ENCODE measurements at regions of chr12 and their contacts with region 1.

Region 1: DNA sequence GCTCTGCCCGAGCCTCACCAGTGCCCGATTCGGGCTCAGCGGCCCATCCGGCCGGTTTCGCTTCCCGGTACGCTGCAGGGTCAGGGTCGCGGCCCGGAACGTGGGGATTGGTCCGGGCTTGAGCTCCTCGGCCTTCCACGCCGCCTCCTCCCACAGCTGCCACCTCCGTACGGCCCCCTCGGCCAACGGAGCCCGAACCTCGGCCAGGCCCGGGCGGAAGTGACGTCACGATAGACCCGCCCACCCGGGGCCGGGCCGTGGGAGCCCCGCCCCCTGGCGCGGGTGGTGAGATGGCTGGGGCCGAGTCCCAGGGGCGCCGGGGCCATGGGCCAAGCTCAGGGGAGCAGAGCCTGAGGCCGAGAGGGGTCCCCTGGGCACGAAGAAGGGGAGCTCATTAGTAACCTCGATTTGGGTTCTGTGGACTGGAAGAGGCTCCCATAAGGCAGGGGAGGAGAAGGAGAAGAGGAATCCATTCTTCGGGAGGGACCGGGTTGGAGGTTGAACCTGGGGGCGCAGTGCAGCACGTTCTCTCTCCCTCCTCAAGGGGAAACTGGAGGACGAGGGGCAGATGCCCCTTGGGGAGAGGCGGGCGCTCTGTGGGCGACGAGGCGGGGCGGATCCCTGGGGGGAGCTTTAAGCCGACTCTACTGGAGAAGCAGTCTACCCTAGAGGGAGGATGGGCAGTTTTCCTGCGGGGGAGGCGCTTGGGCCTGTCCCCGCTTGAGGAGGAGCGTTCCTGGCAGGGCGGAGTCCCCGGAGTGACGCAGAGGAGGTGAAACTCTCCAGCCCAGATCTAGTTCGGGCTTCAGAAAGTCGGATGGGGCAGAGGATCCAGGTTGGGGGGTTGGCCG is at the start of gene MLF2:
- DNase-seq: peak; percentile 96
- H3K4me3 ChIP-seq: peak within 1 kb of the TSS; percentile 93
- CTCF ChIP-seq: peak; percentile 94

Region 2: GRCh38 chr12:6708960-6709394 is 44.2 kb before region 1 on chr12:
- CTCF ChIA-PET with region 1: interaction called, 11 read pairs
- POLR2A ChIA-PET with region 1: no interaction called
- DNase-seq: no peak
- H3K4me3 ChIP-seq: no peak overlapping the region
- CTCF ChIP-seq: no peak

Region 3: DNA sequence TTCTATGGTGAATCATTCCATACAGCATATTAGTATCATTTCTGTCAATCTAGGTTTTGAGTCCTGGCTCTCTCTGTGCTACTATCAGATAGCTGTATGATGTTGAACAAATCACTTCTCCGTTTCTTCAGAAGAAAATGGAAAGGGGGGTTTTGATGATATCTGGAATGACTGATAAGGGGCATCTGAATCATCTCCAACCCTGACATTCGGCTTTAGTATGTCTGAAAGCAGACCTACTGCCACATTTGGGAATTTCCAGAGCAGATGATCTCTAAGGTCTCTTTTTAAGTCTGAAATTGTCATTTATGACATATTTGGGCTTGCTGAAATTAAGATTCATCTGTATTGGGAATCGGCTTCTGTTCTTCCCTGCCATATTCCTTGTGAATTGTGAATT is 10.3 kb before region 1 on chr12:
- CTCF ChIA-PET with region 1: interaction called, 113 read pairs
- POLR2A ChIA-PET with region 1: interaction called, 6 read pairs
- DNase-seq: no peak
- H3K4me3 ChIP-seq: no peak overlapping the region
- CTCF ChIP-seq: no peak

Region 4: GRCh38 chr12:6792522-6793201 is 39.5 kb after region 1 on chr12:
- CTCF ChIA-PET with region 1: interaction called, 38 read pairs
- POLR2A ChIA-PET with region 1: interaction called, 6 read pairs
- DNase-seq: no peak
- H3K4me3 ChIP-seq: peak overlapping the region; percentile 6; the same call in 1 of the 2 replicates
- CTCF ChIP-seq: no peak

Region 5: GRCh38 chr12:6825398-6826124 is 72.4 kb after region 1 on chr12:
- CTCF ChIA-PET with region 1: interaction called, 304 read pairs
- POLR2A ChIA-PET with region 1: interaction called, 24 read pairs
- DNase-seq: peak; percentile 26
- H3K4me3 ChIP-seq: peak overlapping the region; percentile 48
- CTCF ChIP-seq: peak; percentile 90

Region 6: DNA sequence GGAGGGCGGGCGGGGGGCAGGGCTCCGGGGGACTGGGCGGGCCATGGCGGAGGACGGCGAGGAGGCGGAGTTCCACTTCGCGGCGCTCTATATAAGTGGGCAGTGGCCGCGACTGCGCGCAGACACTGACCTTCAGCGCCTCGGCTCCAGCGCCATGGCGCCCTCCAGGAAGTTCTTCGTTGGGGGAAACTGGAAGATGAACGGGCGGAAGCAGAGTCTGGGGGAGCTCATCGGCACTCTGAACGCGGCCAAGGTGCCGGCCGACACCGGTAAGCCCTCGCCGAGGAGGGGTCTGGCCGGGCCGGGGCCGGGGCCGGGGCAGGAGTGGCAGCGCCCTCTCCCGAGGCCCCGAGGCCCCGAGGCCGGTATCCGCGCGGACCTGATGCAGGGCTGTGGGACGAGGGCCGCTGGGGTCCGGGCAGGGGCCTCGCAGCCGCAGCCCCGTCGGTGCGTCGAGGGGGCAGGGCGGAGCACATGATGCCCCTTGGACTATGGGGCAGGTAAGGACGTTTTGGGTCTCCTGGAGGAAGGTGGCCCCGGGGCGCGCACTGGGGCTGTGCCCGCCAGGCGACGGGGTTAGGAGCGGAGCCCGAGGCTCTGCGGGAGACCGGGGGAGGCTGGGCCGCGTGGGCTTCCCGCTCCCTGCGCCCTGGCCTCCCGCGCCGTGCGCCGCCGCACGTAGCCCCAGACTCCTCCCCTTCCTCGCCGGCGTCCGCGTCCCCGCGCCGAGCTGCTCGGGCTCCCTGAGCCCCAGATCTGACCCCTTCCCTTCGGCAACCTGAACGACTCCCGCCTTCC is 114.5 kb after region 1 on chr12 and contains the start of gene TPI1:
- CTCF ChIA-PET with region 1: interaction called, 19 read pairs
- POLR2A ChIA-PET with region 1: interaction called, 12 read pairs
- DNase-seq: no peak
- H3K4me3 ChIP-seq: peak within 1 kb of the TSS; percentile 96
- CTCF ChIP-seq: no peak

Measured in AG04449 (cell line).